Heart right ventricle (tissue), 16 donors: ENCODE measurements at regions of chr5 and their contacts with region 1.

Region 1: DNA sequence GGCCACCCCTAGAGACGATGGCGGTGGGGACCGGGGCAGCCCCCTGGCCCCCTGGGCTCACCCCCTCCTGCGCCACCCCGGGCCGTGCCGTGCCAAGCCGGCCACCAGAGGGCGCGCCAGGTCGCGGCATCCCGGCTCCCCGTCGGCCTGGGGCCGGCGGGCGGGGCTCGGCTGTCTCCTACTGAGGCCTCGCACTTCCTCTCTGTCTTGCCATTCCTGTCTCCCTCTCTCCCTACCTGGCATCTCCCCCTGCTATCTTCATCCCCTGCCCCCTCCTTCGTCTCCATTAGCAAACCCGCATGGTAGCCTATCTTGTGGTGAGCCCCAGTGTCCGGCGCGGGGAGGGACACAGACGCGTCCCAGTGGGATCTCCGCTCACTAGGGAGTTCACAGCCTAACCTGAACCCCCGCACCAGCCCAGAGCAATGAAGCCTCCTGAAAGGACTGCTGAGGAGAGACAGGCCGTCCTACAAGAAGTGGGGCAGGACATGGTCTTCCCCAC is 29.8 kb upstream of the FABP6 start:
- DNase-seq: peak; percentile 44 to 83
- ATAC-seq: peak; percentile 91 to 97 (median 95)
- H3K4me3 ChIP-seq: peak overlapping the region; percentile 14 to 59 (median 44)
- H3K27ac ChIP-seq: peak overlapping the region in 1 of 10 donors; percentile 20
- H3K4me1 ChIP-seq: peaks cover 0 to 28% (median 18%) of the 10 kb centered on the region in 9 donors
- H3K27me3 ChIP-seq: no peaks in the 10 kb centered on the region
- CTCF ChIP-seq: peak; percentile 90 to 99 (median 96)

Region 2: DNA sequence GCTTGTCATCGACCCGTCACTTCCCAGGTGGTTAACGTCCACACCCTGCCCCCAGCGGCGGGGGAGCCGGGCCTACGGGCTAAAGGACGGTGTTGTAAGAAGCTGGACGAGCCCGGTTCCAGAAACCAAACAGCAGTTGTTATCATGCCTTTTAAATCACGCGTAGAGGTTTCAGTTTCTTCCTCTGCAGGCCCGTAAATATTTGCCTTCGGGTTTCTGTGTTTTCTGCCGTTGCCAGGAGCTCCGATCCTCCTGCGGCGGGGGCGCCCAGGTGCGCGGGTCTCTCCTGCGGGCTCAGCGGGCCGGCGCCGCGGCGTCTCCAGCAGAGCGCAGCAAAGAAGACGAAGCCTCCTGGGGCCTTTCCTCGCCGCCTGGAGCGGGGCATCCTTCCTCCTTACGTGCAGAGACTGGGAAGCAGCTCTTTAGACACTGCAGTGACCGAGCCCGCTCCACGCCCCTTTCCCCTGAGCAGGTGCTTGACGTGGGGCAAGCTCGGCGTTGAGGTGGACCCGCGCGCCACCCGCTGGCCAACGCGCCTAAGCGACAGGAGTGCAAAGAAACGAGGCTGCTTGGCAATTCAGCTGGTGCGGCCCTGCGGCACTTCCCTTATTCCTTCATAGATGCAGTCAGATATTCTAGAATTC is 212.3 kb before region 1 on chr5:
- intact Hi-C with region 1: no loop called
- DNase-seq: peak; percentile 66 to 74
- ATAC-seq: peak; percentile 86 to 96 (median 92)
- H3K4me3 ChIP-seq: peak overlapping the region; percentile 17 to 54 (median 48)
- H3K27ac ChIP-seq: no peak overlapping the region
- H3K4me1 ChIP-seq: peaks cover 0 to 10% (median 0%) of the 10 kb centered on the region in 9 donors
- H3K27me3 ChIP-seq: peaks cover 0 to 46% (median 22%) of the 10 kb centered on the region in 7 donors
- CTCF ChIP-seq: peak; percentile 47 to 84 (median 70)

Region 3: GRCh38 chr5:160030631-160031377 is 168.7 kb before region 1 on chr5:
- intact Hi-C with region 1: loop called in 2 of 10 experiments (anchors 5 to 10 kb)
- DNase-seq: no peak
- ATAC-seq: peak in 4 of 8 donors; percentile 12 to 65 (median 32)
- H3K4me3 ChIP-seq: no peak overlapping the region
- H3K27ac ChIP-seq: peak overlapping the region in 4 of 10 donors; percentile 12 to 49 (median 22)
- H3K4me1 ChIP-seq: peaks cover 0 to 52% (median 36%) of the 10 kb centered on the region in 9 donors
- H3K27me3 ChIP-seq: no peaks in the 10 kb centered on the region
- CTCF ChIP-seq: no peak

Region 4: GRCh38 chr5:160342403-160342941 is 143.0 kb after region 1 on chr5:
- intact Hi-C with region 1: loop called (anchors 1 to 2 kb)
- DNase-seq: no peak
- ATAC-seq: peak in 2 of 8 donors; percentile 52 to 56
- H3K4me3 ChIP-seq: no peak overlapping the region
- H3K27ac ChIP-seq: no peak overlapping the region
- H3K4me1 ChIP-seq: peaks cover 0 to 20% (median 0%) of the 10 kb centered on the region in 9 donors
- H3K27me3 ChIP-seq: no peaks in the 10 kb centered on the region
- CTCF ChIP-seq: no peak

Region 5: DNA sequence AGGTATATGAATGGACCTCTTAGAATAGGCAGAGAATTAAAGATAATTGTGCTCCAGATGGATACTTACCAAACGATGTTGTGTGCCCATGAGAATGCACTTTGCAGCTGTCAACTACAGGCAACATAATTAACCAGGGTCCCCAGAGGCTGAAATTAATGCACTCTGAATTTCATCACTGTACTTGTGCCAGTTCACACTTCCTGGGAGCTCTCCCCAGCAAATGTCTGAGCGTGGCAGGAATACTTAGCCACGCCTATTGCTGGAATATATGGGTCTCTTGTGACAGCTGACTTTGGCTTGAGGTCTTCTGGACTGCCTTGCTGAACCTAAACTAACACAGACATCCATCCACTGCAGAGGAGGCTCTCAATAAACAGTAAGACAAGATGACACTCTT is 182.9 kb after region 1 on chr5:
- intact Hi-C with region 1: loop called in 2 of 10 experiments (anchors 5 kb)
- DNase-seq: no peak
- ATAC-seq: no peak
- H3K4me3 ChIP-seq: no peak overlapping the region
- H3K27ac ChIP-seq: no peak overlapping the region
- H3K4me1 ChIP-seq: peaks cover 0 to 5% (median 0%) of the 10 kb centered on the region in 9 donors
- H3K27me3 ChIP-seq: no peaks in the 10 kb centered on the region
- CTCF ChIP-seq: no peak

Region 6: GRCh38 chr5:160399402-160400353 is 200.2 kb after region 1 on chr5 and contains the start of gene FAM200C:
- intact Hi-C with region 1: loop called in 1 of 10 experiments (anchors 5 kb)
- DNase-seq: peak; percentile 93 to 94
- ATAC-seq: peak; percentile 97 to 99 (median 99)
- H3K4me3 ChIP-seq: peak within 1 kb of the TSS; percentile 42 to 87 (median 70)
- H3K27ac ChIP-seq: peak within 1 kb of the TSS; percentile 57 to 93 (median 88)
- H3K4me1 ChIP-seq: peaks cover 0 to 39% (median 18%) of the 10 kb centered on the region in 9 donors
- H3K27me3 ChIP-seq: no peaks in the 10 kb centered on the region
- CTCF ChIP-seq: no peak
- total RNA-seq, gene FAM200C: 2.3 to 4.5 (median 3.6) TPM